ENCODE measurements at regions of chr5 and their contacts with region 1.

Region 1: GRCh38 chr5:115579747-115580173 is 22.5 kb downstream of the TICAM2 start:
- DNase-seq: peak; percentile 43
- H3K4me3 Mint-ChIP-seq: no peak overlapping the region
- H3K27ac Mint-ChIP-seq: no peak overlapping the region
- H3K4me1 Mint-ChIP-seq: peaks cover 12% of the 10 kb centered on the region
- H3K27me3 Mint-ChIP-seq: no peaks in the 10 kb centered on the region
- CTCF ChIP-seq: no peak

Region 2: DNA sequence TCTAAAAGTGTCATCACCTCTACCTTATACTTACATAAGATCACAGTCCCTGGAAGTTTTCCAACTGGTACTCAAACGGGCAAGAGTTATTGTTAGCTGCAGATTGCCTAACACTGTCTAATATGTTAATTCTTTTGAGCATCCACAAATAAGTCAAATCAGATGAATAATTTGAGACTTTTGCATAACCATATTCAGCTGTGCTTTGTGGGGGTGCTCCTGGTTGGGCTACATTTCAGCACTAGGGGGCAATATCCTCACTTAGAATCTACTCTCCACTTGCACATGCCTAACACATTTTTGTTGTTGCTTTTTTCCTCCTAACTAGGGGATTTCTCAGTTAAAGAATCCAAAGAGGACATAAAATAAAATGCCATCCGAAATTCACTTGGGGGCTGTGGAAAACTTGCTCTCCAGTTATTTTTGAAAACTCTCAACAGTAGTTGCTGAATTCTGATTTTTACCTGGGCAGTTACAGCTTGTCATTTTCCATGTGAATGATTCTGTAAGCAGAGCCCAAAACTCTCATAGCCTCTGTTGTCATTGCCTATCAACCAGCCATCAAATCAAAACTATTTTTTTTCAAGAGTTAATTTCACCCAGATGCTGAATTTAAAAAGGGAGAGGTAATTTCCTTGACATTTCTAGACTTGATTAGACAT is 481.6 kb before region 1 on chr5:
- CTCF ChIA-PET with region 1: interaction called, 3 read pairs
- POLR2A ChIA-PET with region 1: no interaction called
- intact Hi-C with region 1: loop called (anchors 5 kb)
- DNase-seq: peak; percentile 62
- H3K4me3 Mint-ChIP-seq: no peak overlapping the region
- H3K27ac Mint-ChIP-seq: no peak overlapping the region
- H3K4me1 Mint-ChIP-seq: no peaks in the 10 kb centered on the region
- H3K27me3 Mint-ChIP-seq: no peaks in the 10 kb centered on the region
- CTCF ChIP-seq: peak; percentile 66

Region 3: DNA sequence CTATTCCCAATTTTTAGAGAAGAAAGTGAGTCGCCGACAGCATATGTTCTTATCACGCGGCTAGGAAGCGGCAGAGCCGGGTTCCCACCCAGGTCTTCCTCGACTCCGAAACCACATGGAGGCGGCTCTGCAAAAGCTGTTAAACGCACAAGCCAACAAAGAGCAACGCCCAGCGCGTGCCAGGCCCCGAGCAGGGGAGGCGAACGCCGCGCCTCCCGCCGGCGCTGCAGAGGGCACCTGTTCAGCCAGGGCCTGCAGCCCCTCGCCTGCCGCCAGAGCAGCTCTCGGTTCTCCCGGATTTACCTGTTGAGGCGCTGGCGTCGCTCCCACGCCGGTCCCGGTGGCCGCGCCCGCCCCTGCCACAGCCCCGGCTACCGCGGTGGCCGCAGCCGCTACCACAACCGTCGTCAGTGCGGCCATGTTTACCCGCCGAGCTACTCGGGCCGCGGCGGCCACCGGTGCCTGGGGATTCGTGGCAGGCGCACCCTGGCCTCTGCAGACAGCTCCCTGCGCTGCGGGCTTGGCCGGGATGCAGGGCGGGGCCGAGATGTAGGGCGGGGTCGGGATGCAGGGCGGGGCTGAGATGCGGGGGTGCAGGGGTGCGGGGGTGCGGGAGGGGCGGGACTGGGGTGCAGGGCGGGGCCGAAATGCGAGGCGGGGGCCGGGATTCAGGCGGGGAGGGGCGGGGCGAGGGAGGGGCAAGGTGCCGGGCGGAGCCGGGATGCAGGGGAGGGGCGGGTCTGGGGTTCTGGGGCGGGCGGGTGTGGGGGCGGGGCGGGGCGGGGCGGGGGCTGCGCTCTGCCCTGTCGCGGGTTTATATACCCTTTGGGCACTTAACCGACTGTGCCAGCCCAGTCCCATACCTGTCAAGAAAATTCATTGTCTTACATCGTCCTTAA is 283.4 kb before region 1 on chr5 and contains the start of gene CCDC112:
- CTCF ChIA-PET with region 1: interaction called, 14 read pairs
- POLR2A ChIA-PET with region 1: no interaction called
- intact Hi-C with region 1: no loop called
- DNase-seq: peak; percentile 84
- H3K4me3 Mint-ChIP-seq: peak within 1 kb of the TSS; percentile 78
- H3K27ac Mint-ChIP-seq: peak within 1 kb of the TSS; percentile 53
- H3K4me1 Mint-ChIP-seq: peaks cover 17% of the 10 kb centered on the region
- H3K27me3 Mint-ChIP-seq: no peaks in the 10 kb centered on the region
- CTCF ChIP-seq: no peak
- total RNA-seq, gene CCDC112: 10.3 and 10.7 TPM in 2 replicates

Region 4: GRCh38 chr5:115377468-115378217 is 202.1 kb before region 1 on chr5:
- CTCF ChIA-PET with region 1: interaction called, 64 read pairs
- POLR2A ChIA-PET with region 1: interaction called, 5 read pairs
- intact Hi-C with region 1: loop called (anchors 1 kb)
- DNase-seq: peak; percentile 59
- H3K4me3 Mint-ChIP-seq: peak overlapping the region; percentile 31
- H3K27ac Mint-ChIP-seq: peak overlapping the region; percentile 74
- H3K4me1 Mint-ChIP-seq: peaks cover 21% of the 10 kb centered on the region
- H3K27me3 Mint-ChIP-seq: no peaks in the 10 kb centered on the region
- CTCF ChIP-seq: peak; percentile 35

Region 5: GRCh38 chr5:115559524-115559923 is 20.2 kb before region 1 on chr5:
- CTCF ChIA-PET with region 1: interaction called, 20 read pairs
- POLR2A ChIA-PET with region 1: no interaction called
- intact Hi-C with region 1: no loop called
- DNase-seq: no peak
- H3K4me3 Mint-ChIP-seq: no peak overlapping the region
- H3K27ac Mint-ChIP-seq: peak overlapping the region; percentile 74
- H3K4me1 Mint-ChIP-seq: peaks cover 26% of the 10 kb centered on the region
- H3K27me3 Mint-ChIP-seq: no peaks in the 10 kb centered on the region
- CTCF ChIP-seq: no peak

Region 6: GRCh38 chr5:116411101-116411571 is 831.4 kb after region 1 on chr5:
- CTCF ChIA-PET with region 1: no interaction called
- POLR2A ChIA-PET with region 1: no interaction called
- intact Hi-C with region 1: no loop called
- DNase-seq: no peak
- H3K4me3 Mint-ChIP-seq: no peak overlapping the region
- H3K27ac Mint-ChIP-seq: no peak overlapping the region
- H3K4me1 Mint-ChIP-seq: no peaks in the 10 kb centered on the region
- H3K27me3 Mint-ChIP-seq: no peaks in the 10 kb centered on the region
- CTCF ChIP-seq: no peak

Measured in MCF 10A (cell line).